Natural killer cell (primary cell): ENCODE measurements at regions of chr7 and their contacts with region 1.

Region 1: DNA sequence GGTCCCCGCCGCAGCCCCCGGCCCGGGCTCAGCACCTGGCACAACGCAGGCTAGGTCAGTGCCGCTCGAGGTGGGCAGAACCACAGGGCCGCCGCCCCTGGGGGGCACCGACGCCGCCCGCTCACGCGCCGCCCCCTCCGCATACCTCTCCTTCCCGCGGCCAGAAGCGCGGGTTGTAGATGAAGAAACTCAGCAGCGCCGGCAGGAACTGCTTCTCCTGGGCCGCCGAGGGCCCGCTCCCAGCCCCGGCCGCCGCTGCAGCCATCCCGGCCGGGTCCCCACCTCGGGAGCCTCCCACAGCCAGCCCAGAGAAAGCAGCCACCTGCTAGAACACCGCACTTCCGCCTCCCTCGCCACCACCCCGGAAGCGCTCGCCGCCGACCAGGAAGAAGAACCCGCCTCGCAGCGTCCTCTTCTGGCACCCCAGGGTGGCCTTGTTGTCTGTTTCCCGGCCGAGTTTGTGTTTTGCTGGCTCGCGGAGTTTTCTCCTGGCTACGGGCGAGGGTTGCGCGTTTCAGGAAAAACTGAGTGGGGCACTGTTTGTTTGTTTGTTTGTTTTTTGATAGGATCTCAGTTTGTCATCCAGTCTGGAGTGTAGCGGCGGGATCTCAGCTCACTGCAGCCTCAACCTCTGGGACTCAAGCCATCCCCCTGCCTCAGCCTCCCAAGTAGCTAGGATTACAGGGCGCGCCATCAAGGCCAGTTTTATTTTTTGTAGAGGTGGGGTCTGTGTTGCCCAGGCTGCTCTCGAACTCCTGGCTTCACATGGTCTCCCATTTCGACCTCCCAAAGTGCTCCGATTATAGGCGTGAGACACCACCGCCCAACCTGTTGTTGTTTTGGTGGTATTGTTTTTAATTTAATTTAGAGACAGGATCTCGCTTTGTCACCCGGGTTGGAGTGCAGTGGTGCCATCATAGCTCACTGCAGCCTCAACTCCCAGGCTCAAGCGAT is 17.7 kb downstream of the OCM2 start:
- DNase-seq: peak; percentile 66 to 89
- ATAC-seq: peak; percentile 87 to 92 (median 90)
- H3K4me3 ChIP-seq: peak overlapping the region; percentile 82
- H3K4me3 Mint-ChIP-seq: peak overlapping the region; percentile 95
- H3K27ac ChIP-seq: peak overlapping the region; percentile 55
- H3K27ac Mint-ChIP-seq: peak overlapping the region; percentile 86 to 94
- H3K4me1 ChIP-seq: peaks cover 17% of the 10 kb centered on the region
- H3K4me1 Mint-ChIP-seq: peaks cover 6 to 18% of the 10 kb centered on the region in 2 donors
- H3K27me3 ChIP-seq: no peaks in the 10 kb centered on the region
- H3K27me3 Mint-ChIP-seq: no peaks in the 10 kb centered on the region
- CTCF ChIP-seq: no peak

Region 2: DNA sequence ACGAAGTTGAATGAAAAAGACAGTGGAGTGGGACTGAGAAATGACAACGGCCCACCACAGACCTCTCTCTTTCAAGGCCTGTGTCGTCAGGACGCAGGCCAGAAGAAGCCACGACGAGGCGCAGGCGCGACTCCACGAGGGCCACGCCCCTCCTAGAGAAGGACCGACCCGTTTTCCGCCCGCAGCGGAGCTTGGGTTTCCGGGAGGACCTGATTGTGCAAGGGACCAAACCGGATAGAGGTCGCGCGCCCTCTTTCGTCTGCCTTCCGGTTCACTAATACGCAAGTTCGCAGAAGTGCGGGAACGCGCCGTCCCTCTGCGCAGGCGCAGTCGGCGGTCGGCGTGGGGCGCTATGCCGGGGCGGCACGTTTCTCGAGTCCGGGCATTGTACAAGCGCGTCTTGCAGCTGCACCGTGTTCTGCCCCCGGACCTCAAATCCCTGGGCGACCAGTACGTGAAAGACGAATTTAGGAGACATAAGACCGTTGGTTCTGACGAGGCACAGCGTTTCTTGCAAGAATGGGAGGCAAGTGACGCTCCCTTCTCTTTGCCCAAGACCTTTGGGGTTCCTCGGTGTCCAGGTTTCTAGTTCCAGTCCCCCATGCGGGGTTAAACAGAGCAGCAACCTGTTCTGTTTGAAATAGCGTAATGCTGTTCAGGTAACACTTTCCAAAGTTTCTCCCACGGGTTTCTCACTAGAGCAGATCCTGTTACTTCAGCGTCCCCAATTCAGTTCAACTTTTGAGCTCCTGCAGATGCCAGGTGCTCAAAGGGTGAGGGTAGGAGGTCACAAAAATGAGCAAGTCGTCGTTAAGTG is 854.7 kb before region 1 on chr7 and contains the start of gene SDHAF3:
- intact Hi-C with region 1: loop called (anchors 5 kb)
- DNase-seq: peak; percentile 96 to 99
- ATAC-seq: peak; percentile 96 to 99 (median 96)
- H3K4me3 ChIP-seq: peak within 1 kb of the TSS; percentile 77
- H3K4me3 Mint-ChIP-seq: peak within 1 kb of the TSS; percentile 94
- H3K27ac ChIP-seq: peak within 1 kb of the TSS; percentile 83
- H3K27ac Mint-ChIP-seq: peak within 1 kb of the TSS; percentile 85 to 92
- H3K4me1 ChIP-seq: peaks cover 11% of the 10 kb centered on the region
- H3K4me1 Mint-ChIP-seq: peaks cover 38 to 49% of the 10 kb centered on the region in 2 donors
- H3K27me3 ChIP-seq: no peaks in the 10 kb centered on the region
- H3K27me3 Mint-ChIP-seq: peaks cover under 1 to 2% of the 10 kb centered on the region in 2 donors
- CTCF ChIP-seq: no peak
- total RNA-seq, gene SDHAF3: 7.3 to 10.4 (median 10.1) TPM